Caki2 (cell line): ENCODE measurements at regions of chr9 and their contacts with region 1.

Region 1: GRCh38 chr9:21802195-21803000 is at the start of gene MTAP:
- DNase-seq: peak; percentile 89
- total RNA-seq, gene MTAP: 25.4 and 30.5 TPM in 2 replicates

Region 2: GRCh38 chr9:21252721-21253547 is 549.5 kb before region 1 on chr9:
- in situ Hi-C with region 1: no loop called
- DNase-seq: peak; percentile 19

Region 3: DNA sequence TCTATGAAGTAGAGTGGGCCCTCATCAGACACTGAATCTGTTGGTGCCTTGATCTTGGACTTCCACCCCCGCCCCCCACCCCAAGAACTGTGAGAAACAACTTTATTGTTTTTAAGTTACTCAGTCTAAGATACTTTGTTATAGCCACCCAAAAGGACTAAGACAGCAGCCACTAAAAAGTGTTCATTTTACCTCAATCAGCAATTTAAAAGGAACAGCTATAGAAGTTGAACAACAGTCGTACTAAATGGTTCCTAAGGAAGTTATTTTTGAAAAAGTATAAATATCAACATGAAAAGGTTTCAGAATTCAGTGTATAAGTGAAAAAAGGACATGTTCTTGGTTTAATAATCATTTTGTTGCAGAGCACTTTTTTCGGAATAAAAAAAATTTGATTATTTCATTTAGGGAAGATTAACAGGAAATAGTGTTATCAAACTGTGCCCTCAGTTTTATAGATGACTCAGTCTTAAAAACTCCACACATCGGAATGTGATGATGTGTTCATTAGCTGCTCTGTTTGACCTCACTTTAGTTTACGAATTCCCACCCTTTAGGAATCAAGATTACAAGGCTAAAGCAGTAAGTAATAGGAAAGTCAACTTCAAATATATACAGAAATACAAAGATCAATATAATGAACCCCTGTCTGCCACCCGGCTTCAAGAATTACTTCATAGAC is 71.3 kb after region 1 on chr9:
- in situ Hi-C with region 1: loop called (anchors 10 kb)
- DNase-seq: peak; percentile 46

Region 4: DNA sequence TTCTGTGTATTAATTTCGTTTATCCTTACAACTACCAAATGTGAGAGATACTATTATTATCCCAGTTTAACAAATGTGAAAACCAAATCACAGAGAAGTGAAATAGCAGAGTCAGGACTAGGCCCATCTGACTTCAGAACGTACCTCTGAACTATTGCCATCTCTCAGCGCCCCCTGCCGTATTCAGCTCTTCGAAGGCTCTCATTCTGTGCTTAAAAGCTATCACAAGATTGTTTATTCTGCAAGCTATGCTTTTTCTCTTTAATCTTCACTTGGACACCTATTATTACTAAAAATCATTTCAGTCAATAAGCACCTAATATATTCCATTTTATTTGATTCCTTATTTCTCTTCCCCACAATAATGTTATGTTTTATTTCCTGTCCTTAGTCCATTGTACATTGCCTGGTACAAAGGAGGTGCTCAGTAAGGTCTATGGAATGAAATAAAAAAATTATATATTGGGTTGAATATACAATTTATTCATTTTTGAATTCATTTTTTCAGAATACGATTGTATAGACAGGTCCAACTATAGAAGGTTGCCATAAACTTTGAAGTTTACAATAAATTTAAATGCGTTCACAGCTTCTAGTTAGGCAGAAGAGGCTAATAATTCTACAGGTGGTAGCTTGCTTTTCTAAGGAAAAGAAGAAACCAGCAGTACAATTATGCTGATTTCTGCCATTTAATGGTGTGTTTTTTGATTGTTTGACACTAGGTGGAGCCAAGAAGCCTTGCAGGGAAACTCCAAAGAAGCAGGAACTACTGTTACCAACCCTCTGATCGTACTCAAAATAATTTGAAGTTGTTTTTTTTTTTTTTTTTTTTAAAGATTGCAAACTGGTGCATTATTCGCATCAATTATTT is 442.0 kb after region 1 on chr9:
- in situ Hi-C with region 1: loop called (anchors 25 kb)
- DNase-seq: peak; percentile 29

Region 5: DNA sequence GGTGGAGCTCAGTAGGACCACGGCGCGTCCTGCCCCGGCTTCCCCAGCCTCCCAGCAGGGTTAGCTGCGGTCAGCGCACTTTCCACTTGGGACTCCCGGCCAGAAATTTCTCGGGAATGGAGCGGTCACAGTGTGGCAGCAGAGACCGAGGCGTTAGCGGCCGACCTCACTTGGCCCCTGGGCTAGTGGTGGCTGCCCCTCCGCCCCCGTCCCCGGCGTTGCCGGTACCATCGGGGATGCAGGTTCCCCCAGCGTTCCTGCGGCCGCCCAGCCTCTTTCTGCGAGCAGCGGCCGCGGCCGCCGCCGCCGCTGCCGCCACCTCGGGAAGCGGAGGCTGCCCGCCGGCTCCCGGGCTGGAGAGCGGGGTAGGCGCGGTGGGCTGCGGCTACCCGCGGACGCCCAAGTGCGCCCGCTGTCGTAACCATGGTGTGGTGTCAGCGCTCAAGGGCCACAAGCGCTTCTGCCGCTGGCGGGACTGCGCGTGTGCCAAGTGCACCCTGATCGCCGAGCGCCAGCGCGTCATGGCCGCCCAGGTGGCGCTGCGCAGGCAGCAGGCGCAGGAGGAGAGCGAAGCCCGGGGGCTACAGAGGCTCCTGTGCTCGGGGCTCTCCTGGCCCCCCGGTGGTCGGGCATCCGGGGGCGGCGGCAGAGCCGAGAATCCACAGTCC is 644.7 kb after region 1 on chr9:
- in situ Hi-C with region 1: loop called (anchors 25 kb)
- DNase-seq: peak; percentile 78